Pancreas (tissue), 10 donors: ENCODE measurements at regions of chr2 and their contacts with region 1.

Region 1: DNA sequence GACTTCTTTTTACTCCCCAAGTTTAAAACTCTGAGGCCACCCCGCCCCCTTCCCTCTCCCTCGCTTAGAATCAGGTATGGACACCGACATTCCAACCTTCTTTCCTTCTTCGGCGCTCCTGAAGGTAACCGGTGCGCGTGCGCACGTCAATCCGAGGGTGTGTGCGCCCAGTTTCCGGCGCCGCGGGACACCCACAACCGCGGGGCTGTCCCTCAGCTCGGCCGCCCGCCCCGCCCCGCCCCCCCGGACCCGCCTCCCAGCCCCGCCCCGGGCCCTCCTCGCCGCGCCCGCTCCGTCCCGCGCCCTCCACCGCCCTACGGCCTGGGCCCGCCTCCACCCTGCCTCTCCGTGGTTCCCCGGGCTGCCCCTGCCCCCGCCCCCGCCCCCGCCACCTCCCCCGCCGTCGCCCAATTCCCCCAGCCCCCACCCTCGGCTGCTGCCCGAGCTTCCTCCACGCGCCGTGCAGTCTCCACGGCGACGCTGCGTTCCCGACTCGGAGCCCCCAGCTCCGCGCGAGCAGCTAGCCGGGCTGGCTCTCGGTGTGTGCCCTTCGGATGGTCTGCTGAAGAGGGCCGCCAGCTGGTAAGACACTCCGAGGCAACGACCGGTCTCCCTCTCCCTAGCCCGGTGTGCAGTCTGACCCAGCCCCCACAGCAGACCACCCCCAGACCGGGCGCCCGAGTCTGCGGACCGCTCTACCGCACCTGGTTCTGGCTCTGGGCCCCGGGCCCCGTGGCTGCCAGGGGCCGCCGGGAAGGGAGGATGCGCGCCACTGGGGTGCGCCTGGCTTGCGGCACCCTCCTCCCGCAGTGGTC is 635 bp downstream of the ERICH2 start:
- DNase-seq: peak; percentile 86 to 94 (median 89)
- ATAC-seq: peak; percentile 94 to 95 (median 94)
- H3K4me3 ChIP-seq: peak overlapping the region; percentile 43 to 92 (median 76)
- H3K27ac ChIP-seq: peak overlapping the region; percentile 56 to 87 (median 72)
- H3K4me1 ChIP-seq: peaks cover 0 to 16% (median 6%) of the 10 kb centered on the region in 3 donors
- H3K27me3 ChIP-seq: no peaks in the 10 kb centered on the region
- CTCF ChIP-seq: no peak

Region 2: DNA sequence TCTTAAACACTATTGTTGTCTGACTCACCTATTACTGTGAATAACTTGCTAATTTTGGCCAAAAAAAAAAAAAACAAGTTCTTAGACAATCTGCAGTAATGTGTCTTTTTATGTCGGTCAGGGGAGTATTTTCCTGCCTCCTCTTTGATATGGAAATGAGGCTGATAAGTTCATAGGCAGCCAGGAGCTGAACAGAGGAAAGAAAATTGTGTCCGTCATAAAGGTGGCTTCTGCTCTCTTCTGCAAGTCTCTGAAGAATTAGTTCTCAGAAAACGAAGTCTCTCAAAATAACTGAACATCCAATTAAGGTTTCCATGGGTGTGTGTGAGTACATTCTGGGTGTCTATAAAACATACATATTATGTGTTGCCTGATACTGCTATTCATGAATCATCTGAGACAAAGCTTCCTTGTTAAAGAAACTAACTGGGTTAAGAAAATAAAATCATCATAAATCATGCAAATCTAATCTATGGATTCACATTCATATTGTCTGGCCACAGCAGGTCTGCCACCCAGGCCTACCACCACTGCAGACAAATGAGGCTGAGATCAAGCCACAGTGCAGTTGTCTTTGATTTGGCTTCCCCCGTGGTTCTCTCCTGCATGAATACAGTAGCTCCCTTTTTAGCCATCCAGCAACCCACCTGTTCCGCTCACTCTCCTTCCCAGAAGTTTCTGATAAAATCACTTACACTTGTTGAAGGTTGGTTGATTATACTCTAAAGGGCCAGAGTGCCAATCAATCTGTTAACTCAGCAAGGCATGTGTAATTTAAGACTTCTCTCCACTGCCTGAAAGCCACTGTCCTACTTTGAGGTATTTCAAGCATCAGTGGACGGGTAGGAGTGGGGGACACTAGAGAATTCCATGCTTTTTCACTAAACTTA is 75.0 kb before region 1 on chr2:
- intact Hi-C with region 1: no loop called
- DNase-seq: no peak
- ATAC-seq: peak in 3 of 4 donors; percentile 68 to 86 (median 80)
- H3K4me3 ChIP-seq: no peak overlapping the region
- H3K27ac ChIP-seq: no peak overlapping the region
- H3K4me1 ChIP-seq: peaks cover 0 to 8% (median 5%) of the 10 kb centered on the region in 3 donors
- H3K27me3 ChIP-seq: no peaks in the 10 kb centered on the region
- CTCF ChIP-seq: no peak

Region 3: DNA sequence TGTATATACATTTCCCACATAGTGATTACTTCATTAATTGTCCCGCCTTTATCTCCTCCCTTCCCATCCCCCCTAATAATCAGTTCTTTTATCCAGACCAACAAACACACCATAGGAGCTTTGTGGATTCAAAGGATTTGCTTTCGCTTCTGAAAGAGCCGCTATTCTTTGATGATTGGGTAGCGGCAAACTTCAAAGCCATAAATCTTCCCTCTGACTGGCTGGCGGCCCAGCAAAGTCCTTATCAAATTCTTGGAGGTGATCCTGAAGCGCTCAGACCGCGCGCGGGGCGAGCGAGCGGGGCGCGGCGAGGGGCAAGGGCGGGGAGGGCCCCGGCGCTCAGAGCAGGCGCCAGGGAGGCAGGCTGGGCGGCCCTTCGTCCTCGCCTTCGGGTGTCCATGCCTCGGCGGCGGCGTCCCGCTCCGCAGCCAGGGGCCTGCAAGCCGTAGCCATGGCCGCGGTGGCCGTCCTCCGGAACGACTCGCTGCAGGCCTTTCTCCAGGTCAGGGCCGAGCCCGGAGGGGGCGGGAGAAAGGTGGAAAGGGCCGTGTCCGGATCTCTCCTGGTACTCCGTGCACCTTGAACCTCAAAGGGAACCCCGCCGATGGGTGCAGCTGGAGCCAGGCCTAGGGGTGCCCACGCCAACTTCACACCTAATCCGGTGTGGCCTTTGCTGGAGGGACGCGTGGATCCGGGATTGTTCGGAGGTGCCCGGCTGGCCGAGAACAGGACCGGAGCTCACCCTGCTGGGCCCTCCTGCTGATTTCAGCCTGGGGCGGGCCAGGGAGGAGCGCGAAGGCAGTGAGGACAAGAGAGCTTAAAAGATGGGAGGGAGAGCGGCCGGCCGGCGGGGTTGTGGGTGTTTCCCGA is 55.5 kb before region 1 on chr2 and contains the start of gene SP5:
- intact Hi-C with region 1: loop called in 1 of 3 experiments (anchors 10 kb)
- DNase-seq: peak; percentile 62 to 88 (median 76)
- ATAC-seq: peak; percentile 61 to 84 (median 80)
- H3K4me3 ChIP-seq: peak within 1 kb of the TSS; percentile 6 to 59 (median 44)
- H3K27ac ChIP-seq: peak within 1 kb of the TSS in 2 of 4 donors; percentile 35 to 51
- H3K4me1 ChIP-seq: peaks cover 3 to 14% (median 13%) of the 10 kb centered on the region in 3 donors
- H3K27me3 ChIP-seq: no peaks in the 10 kb centered on the region
- CTCF ChIP-seq: no peak
- total RNA-seq, gene SP5: 0.08 to 2.1 (median 0.28) TPM in 5 of 6 donors, not detected in the other